Spleen (tissue), 13 donors: ENCODE measurements at regions of chr13 and their contacts with region 1.

Region 1: GRCh38 chr13:28494776-28495537 is at the start of gene FLT1:
- DNase-seq: peak; percentile 85
- H3K4me3 ChIP-seq: peak within 1 kb of the TSS; percentile 49 to 80 (median 60)
- H3K27ac ChIP-seq: peak within 1 kb of the TSS in 7 of 8 donors; percentile 61 to 80 (median 79)
- H3K4me1 ChIP-seq: peaks cover 15 to 62% (median 38%) of the 10 kb centered on the region in 6 donors
- H3K27me3 ChIP-seq: peaks cover 3 to 85% (median 60%) of the 10 kb centered on the region in 7 donors
- CTCF ChIP-seq: peak in 1 of 11 experiments; percentile 14
- POLR2A ChIP-seq: peak in 1 of 3 donors; percentile 50
- total RNA-seq, gene FLT1: 48.8 to 70.6 (median 61.1) TPM

Region 2: GRCh38 chr13:28478127-28478526 is 16.8 kb before region 1 on chr13:
- intact Hi-C with region 1: no loop called
- DNase-seq: no peak
- H3K4me3 ChIP-seq: no peak overlapping the region
- H3K27ac ChIP-seq: no peak overlapping the region
- H3K4me1 ChIP-seq: peaks cover 0 to 4% (median 0%) of the 10 kb centered on the region in 6 donors
- H3K27me3 ChIP-seq: peaks cover 0 to 13% (median 0%) of the 10 kb centered on the region in 7 donors
- CTCF ChIP-seq: no peak
- POLR2A ChIP-seq: no peak

Region 3: GRCh38 chr13:28636674-28637317 is 141.8 kb after region 1 on chr13:
- intact Hi-C with region 1: loop called (anchors 10 kb)
- DNase-seq: no peak
- H3K4me3 ChIP-seq: no peak overlapping the region
- H3K27ac ChIP-seq: peak overlapping the region in 3 of 8 donors; percentile 35 to 60 (median 60)
- H3K4me1 ChIP-seq: peaks cover 0 to 50% (median 25%) of the 10 kb centered on the region in 6 donors
- H3K27me3 ChIP-seq: no peaks in the 10 kb centered on the region
- CTCF ChIP-seq: peak; percentile 66 to 91 (median 80)
- POLR2A ChIP-seq: no peak